HepG2 (cell line): ENCODE measurements at regions of chr12 and their contacts with region 1.

Region 1: DNA sequence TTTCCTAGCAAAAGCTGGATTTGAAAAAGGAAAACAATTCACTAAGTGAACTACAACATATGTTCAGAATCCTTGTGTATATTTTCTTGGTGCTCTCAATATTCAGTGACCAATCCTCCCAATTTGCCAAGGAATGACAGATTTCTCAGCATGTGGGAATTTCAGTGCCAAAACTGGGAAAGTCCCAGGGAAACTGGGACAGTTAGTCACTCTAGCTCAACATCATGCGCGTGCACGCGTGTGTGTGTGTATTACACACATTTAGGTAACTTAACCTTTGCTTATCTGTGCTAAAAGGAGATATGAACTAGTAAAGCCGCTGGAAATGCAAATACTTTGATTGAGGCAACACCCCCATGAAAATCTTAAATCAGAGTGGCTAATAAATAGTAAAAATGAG is 26.1 kb upstream of the SLC6A13 start:
- DNase-seq: no peak
- ATAC-seq: no peak
- H3K4me3 ChIP-seq: no peak overlapping the region
- H3K27ac ChIP-seq: no peak overlapping the region
- H3K4me1 ChIP-seq: peaks cover 7% of the 10 kb centered on the region
- H3K27me3 ChIP-seq: no peaks in the 10 kb centered on the region
- CTCF ChIP-seq: no peak
- EP300 ChIP-seq: no peak
- POLR2A ChIP-seq: no peak
- RAD21 ChIP-seq: no peak

Region 2: DNA sequence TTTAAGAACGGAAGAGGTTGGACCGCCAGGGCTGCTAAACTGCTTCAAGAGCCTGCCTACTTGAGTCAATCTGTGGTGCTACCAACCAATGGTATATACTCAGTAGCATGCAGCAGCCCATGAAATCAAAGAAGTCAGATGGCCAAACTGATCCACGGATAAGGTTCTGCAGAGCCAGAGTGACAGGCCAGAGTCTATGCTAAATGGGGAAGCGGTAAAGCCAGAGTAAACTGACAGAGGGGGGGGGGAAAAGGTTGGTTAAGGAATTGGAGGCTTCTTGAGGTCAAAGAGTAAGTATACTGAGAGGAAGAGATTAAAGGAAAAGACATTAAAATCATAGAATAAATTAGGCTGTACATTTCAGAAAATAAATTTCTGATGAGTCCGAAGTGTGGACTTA is 10.6 kb before region 1 on chr12:
- CTCF ChIA-PET with region 1: no interaction called
- POLR2A ChIA-PET with region 1: interaction called, 5 read pairs
- in situ Hi-C with region 1: no loop called
- intact Hi-C with region 1: loop called (anchors 1 kb)
- DNase-seq: no peak
- ATAC-seq: no peak
- H3K4me3 ChIP-seq: no peak overlapping the region
- H3K27ac ChIP-seq: no peak overlapping the region
- H3K4me1 ChIP-seq: peaks cover 11% of the 10 kb centered on the region
- H3K27me3 ChIP-seq: no peaks in the 10 kb centered on the region
- CTCF ChIP-seq: no peak
- EP300 ChIP-seq: no peak
- POLR2A ChIP-seq: no peak
- RAD21 ChIP-seq: no peak

Region 3: DNA sequence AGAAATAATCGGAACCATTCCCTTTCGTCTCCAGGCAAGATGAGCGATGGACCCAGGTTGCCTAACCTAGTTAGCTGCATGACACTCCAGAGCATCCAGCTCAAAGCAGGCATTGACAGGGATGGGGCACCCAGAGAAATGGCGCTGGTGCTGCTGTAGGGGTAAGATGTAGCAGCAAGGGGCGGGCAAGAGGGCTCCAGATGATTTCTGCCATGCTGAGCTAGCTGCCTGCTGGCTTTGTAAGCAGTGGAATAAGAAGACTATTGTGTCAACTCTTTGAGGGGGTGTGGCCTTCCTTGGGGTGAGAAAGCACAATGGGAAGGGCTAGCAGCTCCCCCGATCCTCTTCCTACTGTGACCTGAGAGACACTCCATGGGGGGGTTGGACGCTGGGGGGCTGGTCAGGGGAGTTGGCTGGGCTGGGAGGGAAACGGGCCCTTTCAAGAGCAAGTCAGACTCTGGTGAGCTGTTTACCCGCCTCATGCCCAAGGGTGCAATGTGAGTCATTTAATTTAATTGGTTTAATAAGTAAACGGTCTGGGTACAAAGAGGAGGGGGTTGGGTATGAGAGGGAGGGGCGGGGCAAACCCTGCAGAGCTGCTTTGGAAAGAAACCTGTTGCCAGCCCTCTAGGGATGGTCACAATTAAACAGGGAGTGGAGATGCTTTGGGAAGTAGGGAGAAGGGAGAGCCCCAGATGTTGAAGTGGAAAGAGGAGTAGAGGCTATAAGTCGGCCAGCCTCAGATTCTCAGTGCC is 221.6 kb after region 1 on chr12:
- CTCF ChIA-PET with region 1: no interaction called
- POLR2A ChIA-PET with region 1: no interaction called
- in situ Hi-C with region 1: no loop called
- intact Hi-C with region 1: no loop called
- DNase-seq: no peak
- ATAC-seq: peak; percentile 34; the same call in 1 of the 3 replicates
- H3K4me3 ChIP-seq: no peak overlapping the region
- H3K27ac ChIP-seq: no peak overlapping the region
- H3K4me1 ChIP-seq: peaks cover 10% of the 10 kb centered on the region; the same call in 1 of the 2 replicates
- H3K27me3 ChIP-seq: no peaks in the 10 kb centered on the region
- CTCF ChIP-seq: no peak
- EP300 ChIP-seq: no peak
- POLR2A ChIP-seq: no peak
- RAD21 ChIP-seq: no peak